ENCODE measurements at regions of chr14 and their contacts with region 1.

Region 1: GRCh38 chr14:81220830-81221578 is at the start of gene GTF2A1:
- DNase-seq: peak; percentile 95
- H3K4me3 Mint-ChIP-seq: peak within 1 kb of the TSS; percentile 100
- H3K27ac Mint-ChIP-seq: peak within 1 kb of the TSS; percentile 100
- H3K4me1 Mint-ChIP-seq: peaks cover 30% of the 10 kb centered on the region
- H3K27me3 Mint-ChIP-seq: peaks cover 2% of the 10 kb centered on the region
- total RNA-seq, gene GTF2A1: 41.2 and 45.1 TPM in 2 replicates

Region 2: GRCh38 chr14:81187832-81188522 is 33.0 kb before region 1 on chr14:
- intact Hi-C with region 1: loop called (anchors 2 kb)
- DNase-seq: no peak
- H3K4me3 Mint-ChIP-seq: peak overlapping the region; percentile 5
- H3K27ac Mint-ChIP-seq: peak overlapping the region; percentile 12
- H3K4me1 Mint-ChIP-seq: peaks cover 47% of the 10 kb centered on the region
- H3K27me3 Mint-ChIP-seq: no peaks in the 10 kb centered on the region

Region 3: GRCh38 chr14:81464247-81465002 is 243.4 kb after region 1 on chr14:
- intact Hi-C with region 1: loop called (anchors 2 kb)
- DNase-seq: peak; percentile 50
- H3K4me3 Mint-ChIP-seq: peak overlapping the region; percentile 75
- H3K27ac Mint-ChIP-seq: peak overlapping the region; percentile 77
- H3K4me1 Mint-ChIP-seq: peaks cover 11% of the 10 kb centered on the region
- H3K27me3 Mint-ChIP-seq: no peaks in the 10 kb centered on the region

Region 4: GRCh38 chr14:81691931-81692330 is 470.9 kb after region 1 on chr14:
- intact Hi-C with region 1: no loop called
- DNase-seq: no peak
- H3K4me3 Mint-ChIP-seq: no peak overlapping the region
- H3K27ac Mint-ChIP-seq: no peak overlapping the region
- H3K4me1 Mint-ChIP-seq: no peaks in the 10 kb centered on the region
- H3K27me3 Mint-ChIP-seq: no peaks in the 10 kb centered on the region

Measured in activated T-helper 2 cell treated with anti-CD3 and anti-CD28 coated beads, Interferon-gamma antibody, Interleukin-2, Interleukin-4, amounts not matched to agents 10 μg/mL and 5 μg/mL and 100 μg/mL, durations not matched to agents 14 hours and 24 hours and 36 hours (primary cell).